ENCODE measurements at regions of chr17 and their contacts with region 1.

Region 1: GRCh38 chr17:81927653-81928543 is at the start of gene MAFG:
- DNase-seq: peak; percentile 91
- H3K4me3 Mint-ChIP-seq: peak within 1 kb of the TSS; percentile 91
- H3K27ac Mint-ChIP-seq: peak within 1 kb of the TSS; percentile 94
- H3K4me1 Mint-ChIP-seq: peaks cover 35% of the 10 kb centered on the region
- H3K27me3 Mint-ChIP-seq: peaks cover 4% of the 10 kb centered on the region
- total RNA-seq, gene MAFG: 35.2 to 36.5 TPM

Region 2: GRCh38 chr17:81833160-81833920 is 94.6 kb before region 1 on chr17 and contains the start of gene MCRIP1:
- CTCF ChIA-PET with region 1: no interaction called
- POLR2A ChIA-PET with region 1: interaction called, 12 read pairs
- DNase-seq: peak; percentile 96
- H3K4me3 Mint-ChIP-seq: peak within 1 kb of the TSS; percentile 88
- H3K27ac Mint-ChIP-seq: peak within 1 kb of the TSS; percentile 92
- H3K4me1 Mint-ChIP-seq: peaks cover 31% of the 10 kb centered on the region
- H3K27me3 Mint-ChIP-seq: no peaks in the 10 kb centered on the region
- total RNA-seq, gene MCRIP1: 37.1 to 38.2 TPM

Region 3: DNA sequence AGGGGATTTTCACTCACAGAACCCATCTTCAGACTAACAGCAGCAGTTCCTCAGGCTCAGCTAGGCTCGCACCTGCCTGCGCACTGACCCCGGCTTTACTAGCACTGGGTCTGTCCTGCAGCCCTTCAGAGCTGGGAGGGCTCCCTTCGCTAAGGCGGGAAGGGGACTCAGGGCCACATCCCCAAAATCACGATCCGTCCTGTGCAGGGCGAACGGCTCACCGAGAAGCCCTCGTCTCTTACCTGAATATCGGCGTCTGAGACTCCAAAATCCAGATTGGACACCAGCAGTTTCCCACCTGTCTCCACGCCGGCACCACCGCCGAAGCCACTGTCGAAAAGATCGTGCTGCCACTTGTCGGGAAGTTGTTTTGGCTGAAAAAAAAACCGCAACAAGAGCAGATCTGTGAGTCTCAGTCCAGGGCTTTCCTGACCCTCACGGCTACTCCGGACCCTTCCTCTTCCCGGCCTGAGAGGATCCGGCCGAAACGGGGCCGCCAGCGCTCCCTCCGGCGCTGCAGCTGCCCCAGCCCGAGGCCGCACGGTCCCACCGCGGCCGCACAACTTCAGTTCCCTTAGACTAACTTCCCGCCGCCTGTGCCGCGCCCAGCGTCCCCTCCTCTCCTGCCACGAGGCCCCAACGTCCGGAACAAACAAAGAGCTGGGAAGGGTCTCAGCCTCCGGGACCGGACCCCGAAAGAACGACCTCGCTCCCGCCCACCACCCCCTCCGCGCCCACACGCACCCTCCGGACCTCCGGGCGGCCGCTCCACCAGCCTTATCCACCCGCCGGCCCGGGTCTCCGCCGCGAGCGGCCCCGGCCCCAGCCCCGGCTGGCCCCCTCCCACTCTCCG is 37.2 kb before region 1 on chr17:
- CTCF ChIA-PET with region 1: interaction called, 8 read pairs
- POLR2A ChIA-PET with region 1: interaction called, 10 read pairs
- DNase-seq: peak; percentile 46
- H3K4me3 Mint-ChIP-seq: peak overlapping the region; percentile 87
- H3K27ac Mint-ChIP-seq: peak overlapping the region; percentile 94
- H3K4me1 Mint-ChIP-seq: peaks cover 43% of the 10 kb centered on the region
- H3K27me3 Mint-ChIP-seq: no peaks in the 10 kb centered on the region

Region 4: GRCh38 chr17:81917565-81918332 is 10.1 kb before region 1 on chr17 and contains the start of gene SIRT7:
- CTCF ChIA-PET with region 1: interaction called, 13 read pairs
- POLR2A ChIA-PET with region 1: interaction called, 42 read pairs
- DNase-seq: peak; percentile 86
- H3K4me3 Mint-ChIP-seq: peak within 1 kb of the TSS; percentile 89
- H3K27ac Mint-ChIP-seq: peak within 1 kb of the TSS; percentile 82
- H3K4me1 Mint-ChIP-seq: peaks cover 48% of the 10 kb centered on the region
- H3K27me3 Mint-ChIP-seq: no peaks in the 10 kb centered on the region
- total RNA-seq, gene SIRT7: 55.8 to 58.4 TPM

Region 5: DNA sequence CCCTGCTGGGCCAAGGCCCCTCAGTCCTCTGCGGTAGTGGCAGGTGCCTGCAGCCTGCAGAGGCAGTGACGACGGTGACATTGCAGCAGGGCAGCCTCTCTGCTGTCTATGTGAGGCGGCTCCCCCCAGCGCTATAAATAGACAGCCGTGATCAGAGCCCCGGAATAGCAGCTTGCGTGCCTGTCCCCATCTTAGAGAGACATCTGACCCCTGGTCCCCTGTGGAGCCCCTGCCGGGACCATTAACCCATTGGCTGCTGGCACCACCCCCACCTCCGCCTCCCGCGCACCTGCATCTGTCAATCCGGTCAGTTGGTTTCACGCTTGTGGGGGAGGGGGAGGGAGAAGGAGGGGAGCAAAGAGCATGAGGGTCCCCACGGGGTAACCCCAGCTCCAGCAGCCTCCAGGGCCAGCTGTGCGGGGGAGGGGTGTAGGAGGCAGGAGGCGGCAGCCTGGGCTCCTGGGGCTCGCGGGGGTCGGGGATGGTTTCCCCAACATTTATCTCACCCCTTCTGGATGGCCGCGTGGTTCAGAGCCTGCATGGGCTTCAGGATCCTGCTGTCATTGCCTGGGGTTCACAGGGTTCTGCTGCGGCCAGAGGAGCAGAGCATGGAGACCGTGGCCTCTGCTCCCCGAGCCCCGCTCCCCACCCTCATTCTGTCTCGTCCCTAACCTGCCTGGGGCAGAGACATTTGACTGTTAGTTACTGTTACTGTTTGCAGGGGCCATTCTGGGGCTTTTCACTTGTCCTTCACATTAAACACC is 14.1 kb after region 1 on chr17:
- CTCF ChIA-PET with region 1: interaction called, 4 read pairs
- POLR2A ChIA-PET with region 1: interaction called, 12 read pairs
- DNase-seq: no peak
- H3K4me3 Mint-ChIP-seq: no peak overlapping the region
- H3K27ac Mint-ChIP-seq: no peak overlapping the region
- H3K4me1 Mint-ChIP-seq: peaks cover 6% of the 10 kb centered on the region
- H3K27me3 Mint-ChIP-seq: no peaks in the 10 kb centered on the region